AG04449 (cell line): ENCODE measurements at regions of chr9 and their contacts with region 1.

Region 1: DNA sequence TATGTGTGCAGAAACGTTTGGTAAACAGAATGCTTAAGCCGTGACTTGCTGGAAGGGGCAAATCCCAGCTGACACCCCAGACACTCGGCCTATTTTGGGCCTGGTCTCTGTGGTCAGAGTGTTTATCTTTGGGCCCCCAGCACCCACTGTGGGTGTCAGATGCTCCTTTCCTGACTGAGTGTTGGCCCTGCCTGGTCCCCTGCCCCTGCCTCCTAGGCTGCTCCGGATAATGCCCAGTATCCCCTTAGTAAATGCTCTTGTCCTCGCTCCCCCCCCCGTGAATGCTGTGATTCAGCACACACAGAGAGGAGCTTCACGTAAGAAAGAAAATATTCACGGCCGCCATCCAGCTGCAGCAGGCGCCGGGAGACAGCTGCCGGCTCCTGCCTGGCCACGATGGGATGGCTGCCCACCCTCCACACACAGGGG is 11.3 kb upstream of the ANGPTL2 start:
- DNase-seq: peak; percentile 69
- H3K4me3 ChIP-seq: no peak overlapping the region
- CTCF ChIP-seq: no peak

Region 2: DNA sequence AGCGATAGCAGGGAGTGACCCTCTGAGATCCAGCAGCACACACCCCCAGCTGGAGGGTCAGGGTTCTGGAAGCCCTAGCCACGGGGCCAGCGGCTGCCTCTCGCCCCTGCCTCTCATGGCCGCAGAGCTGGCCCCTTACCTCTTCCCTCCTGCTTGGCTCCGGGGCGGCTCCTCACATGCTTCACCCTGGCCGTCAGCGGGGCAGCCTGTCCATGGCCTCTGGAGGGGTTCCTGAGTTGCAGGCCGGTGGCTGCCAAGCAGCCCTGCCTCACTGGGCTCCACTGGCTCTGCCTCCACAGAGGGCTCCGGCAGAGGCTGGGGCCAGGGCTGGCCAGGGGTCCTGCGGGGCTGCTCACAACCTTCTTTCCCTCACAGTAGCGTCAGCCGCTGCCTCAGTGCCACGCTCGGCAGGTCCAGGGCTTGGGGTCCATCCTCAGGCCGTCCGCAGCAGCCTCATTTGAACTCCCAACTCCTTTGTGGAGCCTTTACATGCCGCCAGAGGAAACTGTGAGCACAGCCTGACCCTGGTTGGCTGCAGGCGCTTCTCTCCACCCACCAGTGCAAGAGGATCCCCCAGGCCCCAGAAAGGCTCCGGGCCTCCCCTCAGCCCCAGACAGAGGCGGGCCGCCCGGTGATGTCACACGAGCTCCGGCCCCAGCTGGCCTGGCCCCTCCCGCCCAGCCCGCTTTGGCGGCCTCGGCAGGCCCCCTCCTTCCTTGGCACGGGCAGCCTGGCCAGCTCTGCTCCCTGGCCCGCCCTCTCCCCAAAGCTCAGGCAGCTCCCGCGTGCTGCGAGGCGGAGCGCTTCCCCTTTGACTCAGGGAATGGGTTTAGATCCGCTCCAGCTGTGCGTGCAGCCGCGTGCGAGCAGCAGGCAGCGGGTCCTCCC is 11.3 kb before region 1 on chr9 and contains the start of gene ANGPTL2:
- CTCF ChIA-PET with region 1: interaction called, 5 read pairs
- POLR2A ChIA-PET with region 1: interaction called, 25 read pairs
- DNase-seq: peak; percentile 65
- H3K4me3 ChIP-seq: peak within 1 kb of the TSS; percentile 84
- CTCF ChIP-seq: peak; percentile 21

Region 3: GRCh38 chr9:127144670-127145445 is 11.1 kb after region 1 on chr9:
- CTCF ChIA-PET with region 1: interaction called, 12 read pairs
- POLR2A ChIA-PET with region 1: no interaction called
- DNase-seq: no peak
- H3K4me3 ChIP-seq: no peak overlapping the region
- CTCF ChIP-seq: no peak